Breast epithelium (tissue), 4 donors: ENCODE measurements at regions of chr15 and their contacts with region 1.

Region 1: DNA sequence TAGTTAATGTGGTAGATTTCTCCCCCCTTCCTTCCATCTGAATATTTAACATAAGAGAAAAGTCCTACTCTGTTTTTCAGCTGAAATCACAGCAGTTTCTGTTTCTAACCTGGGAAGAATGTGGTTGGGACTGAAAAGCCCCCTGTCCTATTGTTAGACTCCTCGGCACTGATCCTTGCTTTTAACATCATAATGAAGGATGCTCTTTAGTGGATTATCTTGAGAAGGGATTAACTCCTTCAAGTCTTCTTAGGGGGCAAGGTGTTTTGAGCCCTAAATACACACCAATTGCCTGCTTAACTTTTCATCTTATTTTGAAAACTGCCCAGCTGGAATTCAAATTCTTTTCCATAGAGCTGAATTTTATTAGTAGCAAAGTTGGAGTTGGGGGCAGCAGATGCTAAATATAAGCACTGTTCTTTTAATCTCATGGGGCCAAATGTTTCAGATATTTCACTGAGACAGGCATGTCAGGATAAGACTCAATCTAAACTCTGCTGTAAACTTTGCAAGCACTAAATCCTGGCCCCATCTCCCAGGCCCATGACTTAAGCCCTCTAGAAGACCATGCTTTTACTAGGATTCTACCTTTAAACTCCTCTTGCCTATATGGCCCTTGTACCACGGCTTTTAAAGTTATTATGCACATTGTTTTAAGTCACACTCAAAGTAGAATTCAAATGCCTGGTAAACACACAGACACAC is 243.2 kb upstream of the NR2F2 start:
- DNase-seq: no peak
- H3K4me3 ChIP-seq: no peak overlapping the region
- H3K27ac ChIP-seq: no peak overlapping the region
- H3K4me1 ChIP-seq: no peaks in the 10 kb centered on the region
- H3K27me3 ChIP-seq: no peaks in the 10 kb centered on the region
- CTCF ChIP-seq: no peak
- POLR2A ChIP-seq: no peak

Region 2: DNA sequence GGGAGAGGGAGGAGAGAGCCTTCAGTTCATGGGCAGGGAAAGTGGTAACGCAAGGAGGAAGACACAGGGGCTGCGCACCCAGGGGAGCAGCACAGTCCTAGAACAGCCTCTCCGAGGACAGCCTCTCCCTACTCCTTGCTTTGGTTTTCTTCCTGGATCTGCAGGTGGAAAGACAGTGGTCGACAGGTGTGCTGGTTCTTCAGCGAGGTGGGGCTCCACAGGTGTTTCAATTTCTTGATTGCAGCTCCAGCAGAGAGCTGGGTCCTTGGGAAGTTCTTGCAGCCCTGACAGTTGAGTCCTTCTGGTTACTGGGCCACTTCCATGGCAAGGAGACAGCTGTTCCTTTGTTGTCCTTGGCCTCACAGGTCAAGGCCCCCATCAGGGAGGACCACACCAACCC is 22.5 kb after region 1 on chr15:
- intact Hi-C with region 1: loop called (anchors 1 kb)
- DNase-seq: no peak
- H3K4me3 ChIP-seq: no peak overlapping the region
- H3K27ac ChIP-seq: no peak overlapping the region
- H3K4me1 ChIP-seq: no peaks in the 10 kb centered on the region
- H3K27me3 ChIP-seq: no peaks in the 10 kb centered on the region
- CTCF ChIP-seq: no peak
- POLR2A ChIP-seq: no peak